GM12878 (cell line): ENCODE measurements at regions of chr1 and their contacts with region 1.

Region 1: DNA sequence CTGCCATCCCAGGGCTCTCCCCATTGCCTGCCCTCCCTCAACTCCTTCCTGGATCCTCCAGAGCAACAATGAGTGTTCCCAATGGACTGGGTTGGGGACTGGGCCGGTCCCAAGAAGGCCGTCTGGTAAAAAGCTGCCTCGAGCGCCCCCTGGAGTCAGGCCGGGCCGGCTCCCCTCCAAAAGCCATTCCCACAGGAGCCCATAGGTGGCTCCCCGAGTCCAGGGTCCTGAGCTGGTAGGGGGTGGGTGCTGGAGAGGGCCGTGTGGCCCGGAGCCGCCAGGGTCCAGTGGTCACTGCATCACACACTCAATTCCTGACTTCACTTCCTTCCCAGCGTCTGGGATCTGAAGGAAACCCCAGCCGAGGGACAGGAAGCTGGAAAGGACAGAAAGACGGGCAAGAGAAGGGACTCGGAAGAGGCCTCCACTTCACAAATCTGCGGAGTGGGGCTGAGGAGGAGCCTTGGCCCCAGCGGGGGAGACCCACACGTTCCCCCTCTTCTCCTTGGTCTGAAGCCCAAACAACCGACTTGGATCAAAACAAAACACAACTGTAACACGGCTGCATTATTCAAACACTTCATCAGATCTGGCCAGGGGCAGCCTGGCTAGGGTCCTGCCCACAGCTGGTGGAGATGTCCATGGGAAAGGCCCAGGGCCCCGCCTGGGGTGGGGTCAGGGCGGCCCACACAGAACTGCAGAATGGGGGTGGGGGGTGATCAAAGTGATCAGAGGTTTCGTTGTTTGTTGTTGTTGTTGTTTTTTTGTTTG is 10.9 kb upstream of the ALDH4A1 start:
- DNase-seq: no peak
- ATAC-seq: peak; percentile 98
- H3K4me3 ChIP-seq: no peak overlapping the region
- H3K27ac ChIP-seq: no peak overlapping the region
- H3K4me1 ChIP-seq: peaks cover 5% of the 10 kb centered on the region
- H3K27me3 ChIP-seq: no peaks in the 10 kb centered on the region
- CTCF ChIP-seq: peak; percentile 99 to 100 (median 99); a peak in 5 of 6 replicates
- EP300 ChIP-seq: no peak
- POLR2A ChIP-seq: no peak
- RAD21 ChIP-seq: peak; percentile 92

Region 2: GRCh38 chr1:18902523-18903290 is 10.5 kb before region 1 on chr1 and contains the start of gene ALDH4A1:
- CTCF ChIA-PET with region 1: interaction called, 31 read pairs
- POLR2A ChIA-PET with region 1: interaction called, 3 read pairs
- RAD21 ChIA-PET with region 1: interaction called, 9 read pairs
- SMC1A ChIA-PET with region 1: interaction called, 4 read pairs
- in situ Hi-C with region 1: no loop called
- intact Hi-C with region 1: no loop called
- DNase-seq: peak; percentile 90
- ATAC-seq: peak; percentile 99
- H3K4me3 ChIP-seq: peak within 1 kb of the TSS; percentile 86
- H3K27ac ChIP-seq: peak within 1 kb of the TSS; percentile 91
- H3K4me1 ChIP-seq: peaks cover 10% of the 10 kb centered on the region; the same call in 1 of the 2 replicates
- H3K27me3 ChIP-seq: no peaks in the 10 kb centered on the region
- CTCF ChIP-seq: 0 out of 6 replicates have a peak, but pooled peaks of 1 of the 3 experiments have one; percentile 4
- EP300 ChIP-seq: no peak
- POLR2A ChIP-seq: peak; percentile 79
- RAD21 ChIP-seq: no peak
- polyA plus RNA-seq, gene ALDH4A1: 0.06 to 0.53 TPM

Region 3: GRCh38 chr1:18949686-18950400 is 36.6 kb after region 1 on chr1:
- CTCF ChIA-PET with region 1: interaction called, 117 read pairs
- POLR2A ChIA-PET with region 1: interaction called, 3 read pairs
- RAD21 ChIA-PET with region 1: interaction called, 39 read pairs
- SMC1A ChIA-PET with region 1: interaction called, 18 read pairs
- in situ Hi-C with region 1: no loop called
- intact Hi-C with region 1: loop called (anchors 5 kb)
- DNase-seq: no peak
- ATAC-seq: peak; percentile 7; the same call in 1 of the 3 replicates
- H3K4me3 ChIP-seq: peak overlapping the region; percentile 73
- H3K27ac ChIP-seq: peak overlapping the region; percentile 99
- H3K4me1 ChIP-seq: peaks cover 64% of the 10 kb centered on the region
- H3K27me3 ChIP-seq: no peaks in the 10 kb centered on the region
- CTCF ChIP-seq: peak; percentile 28 to 46 (median 41); a peak in 5 of 6 replicates
- EP300 ChIP-seq: no peak
- POLR2A ChIP-seq: no peak
- RAD21 ChIP-seq: peak; percentile 40

Region 4: GRCh38 chr1:18972531-18972930 is 59.3 kb after region 1 on chr1:
- CTCF ChIA-PET with region 1: interaction called, 86 read pairs
- POLR2A ChIA-PET with region 1: no interaction called
- RAD21 ChIA-PET with region 1: interaction called, 8 read pairs
- SMC1A ChIA-PET with region 1: interaction called, 13 read pairs
- in situ Hi-C with region 1: no loop called
- intact Hi-C with region 1: loop called (anchors 2 kb)
- DNase-seq: no peak
- ATAC-seq: no peak
- H3K4me3 ChIP-seq: no peak overlapping the region
- H3K27ac ChIP-seq: no peak overlapping the region
- H3K4me1 ChIP-seq: no peaks in the 10 kb centered on the region
- H3K27me3 ChIP-seq: peaks cover 0 to 3% of the 10 kb centered on the region in 2 experiments; a peak in 1 of 4 replicates
- CTCF ChIP-seq: peak; percentile 20 to 39 (median 20); a peak in 4 of 6 replicates
- EP300 ChIP-seq: no peak
- POLR2A ChIP-seq: no peak
- RAD21 ChIP-seq: peak; percentile 55

Region 5: GRCh38 chr1:19096036-19096833 is 183.0 kb after region 1 on chr1:
- CTCF ChIA-PET with region 1: interaction called, 18 read pairs
- POLR2A ChIA-PET with region 1: no interaction called
- RAD21 ChIA-PET with region 1: interaction called, 6 read pairs
- SMC1A ChIA-PET with region 1: interaction called, 5 read pairs
- in situ Hi-C with region 1: loop called (anchors 5 kb)
- intact Hi-C with region 1: no loop called
- DNase-seq: no peak
- ATAC-seq: 0 out of 3 replicates have a peak, but pooled peaks have one; percentile 25
- H3K4me3 ChIP-seq: no peak overlapping the region
- H3K27ac ChIP-seq: no peak overlapping the region
- H3K4me1 ChIP-seq: no peaks in the 10 kb centered on the region
- H3K27me3 ChIP-seq: no peaks in the 10 kb centered on the region
- CTCF ChIP-seq: peak in 2 of 3 experiments; percentile 33 to 35; a peak in 2 of 6 replicates
- EP300 ChIP-seq: no peak
- POLR2A ChIP-seq: no peak
- RAD21 ChIP-seq: peak; percentile 25; the same call in 1 of the 2 replicates